Endothelial cell of umbilical vein (primary cell): ENCODE measurements at regions of chr11 and their contacts with region 1.

Region 1: DNA sequence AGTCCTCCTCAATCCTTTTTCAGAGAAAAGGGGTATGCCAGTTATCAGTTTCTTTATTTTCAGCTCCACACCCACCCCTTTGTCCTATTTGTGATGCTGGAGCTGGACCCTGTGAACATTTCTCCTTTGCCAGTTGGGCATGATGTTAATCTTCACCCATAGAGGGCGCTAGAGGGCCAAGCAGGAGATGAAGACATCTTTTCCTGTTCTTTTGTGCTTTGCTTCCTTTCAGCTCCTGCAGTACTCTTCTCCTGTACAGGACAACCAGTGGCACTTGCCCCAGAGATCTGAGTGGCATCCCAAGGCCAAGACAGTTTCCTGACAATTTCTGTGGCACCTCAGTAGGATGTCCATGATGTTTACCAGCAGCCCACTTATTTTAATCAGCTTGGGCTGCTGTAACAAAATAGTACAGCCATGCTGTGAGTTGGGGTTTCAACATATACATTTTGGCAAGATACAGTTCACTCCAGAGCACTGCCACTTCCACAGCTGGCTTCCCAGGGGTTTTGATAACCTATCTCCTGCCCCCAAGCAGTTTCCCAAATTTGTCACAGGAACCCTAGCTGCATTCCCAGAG is 4.6 kb downstream of the SAA2 start:
- DNase-seq: peak; percentile 65
- H3K4me3 ChIP-seq: no peak overlapping the region
- H3K27ac ChIP-seq: no peak overlapping the region
- H3K4me1 ChIP-seq: no peaks in the 10 kb centered on the region
- H3K27me3 ChIP-seq: peaks cover 10 to 13% of the 10 kb centered on the region in 2 experiments
- CTCF ChIP-seq: peak; percentile 69 to 84
- POLR2A ChIP-seq: no peak

Region 2: GRCh38 chr11:18229501-18229900 is 14.4 kb before region 1 on chr11:
- CTCF ChIA-PET with region 1: interaction called, 12 read pairs
- POLR2A ChIA-PET with region 1: no interaction called
- dilution Hi-C with region 1: no loop called
- intact Hi-C with region 1: no loop called
- DNase-seq: no peak
- H3K4me3 ChIP-seq: no peak overlapping the region
- H3K27ac ChIP-seq: no peak overlapping the region
- H3K4me1 ChIP-seq: no peaks in the 10 kb centered on the region
- H3K27me3 ChIP-seq: no peaks in the 10 kb centered on the region
- CTCF ChIP-seq: no peak
- POLR2A ChIP-seq: no peak

Region 3: DNA sequence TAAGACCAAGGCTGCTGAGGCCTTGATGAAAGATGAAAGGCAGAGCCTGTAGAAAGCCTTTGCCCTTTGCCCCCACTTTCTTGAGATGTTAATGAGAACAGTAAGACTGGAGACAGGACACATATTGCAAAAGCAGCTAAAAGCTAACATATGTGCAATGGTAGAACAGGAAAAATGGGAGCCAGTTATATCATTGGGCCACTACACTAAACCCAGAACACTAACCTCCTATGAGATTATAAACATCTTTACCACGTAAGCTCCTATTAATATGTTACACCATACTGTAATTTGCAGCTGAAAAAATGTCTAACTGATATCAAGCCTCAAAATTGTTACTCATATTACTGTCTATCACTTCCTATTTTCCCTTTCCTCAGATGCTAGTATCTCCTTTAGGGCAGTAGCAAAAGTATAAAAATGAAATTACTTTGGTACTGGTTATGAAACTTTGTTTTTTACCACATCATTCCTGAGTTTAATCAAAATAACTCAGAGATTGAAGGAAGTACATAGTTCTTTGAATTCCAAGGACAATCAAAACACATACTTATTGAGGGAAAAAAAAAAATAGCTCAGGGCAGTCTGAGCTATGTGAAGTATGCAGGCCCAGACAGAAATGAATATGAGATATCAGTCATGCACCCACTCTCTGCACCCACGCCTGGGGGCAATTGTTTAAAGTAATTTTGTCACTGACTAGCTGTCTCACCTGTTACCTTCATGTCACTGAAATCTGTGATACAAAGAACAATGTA is 69.0 kb after region 1 on chr11:
- CTCF ChIA-PET with region 1: interaction called, 10 read pairs
- POLR2A ChIA-PET with region 1: no interaction called
- dilution Hi-C with region 1: no loop called
- intact Hi-C with region 1: no loop called
- DNase-seq: peak; percentile 22
- H3K4me3 ChIP-seq: no peak overlapping the region
- H3K27ac ChIP-seq: no peak overlapping the region
- H3K4me1 ChIP-seq: no peaks in the 10 kb centered on the region
- H3K27me3 ChIP-seq: no peaks in the 10 kb centered on the region
- CTCF ChIP-seq: no peak
- POLR2A ChIP-seq: no peak

Region 4: DNA sequence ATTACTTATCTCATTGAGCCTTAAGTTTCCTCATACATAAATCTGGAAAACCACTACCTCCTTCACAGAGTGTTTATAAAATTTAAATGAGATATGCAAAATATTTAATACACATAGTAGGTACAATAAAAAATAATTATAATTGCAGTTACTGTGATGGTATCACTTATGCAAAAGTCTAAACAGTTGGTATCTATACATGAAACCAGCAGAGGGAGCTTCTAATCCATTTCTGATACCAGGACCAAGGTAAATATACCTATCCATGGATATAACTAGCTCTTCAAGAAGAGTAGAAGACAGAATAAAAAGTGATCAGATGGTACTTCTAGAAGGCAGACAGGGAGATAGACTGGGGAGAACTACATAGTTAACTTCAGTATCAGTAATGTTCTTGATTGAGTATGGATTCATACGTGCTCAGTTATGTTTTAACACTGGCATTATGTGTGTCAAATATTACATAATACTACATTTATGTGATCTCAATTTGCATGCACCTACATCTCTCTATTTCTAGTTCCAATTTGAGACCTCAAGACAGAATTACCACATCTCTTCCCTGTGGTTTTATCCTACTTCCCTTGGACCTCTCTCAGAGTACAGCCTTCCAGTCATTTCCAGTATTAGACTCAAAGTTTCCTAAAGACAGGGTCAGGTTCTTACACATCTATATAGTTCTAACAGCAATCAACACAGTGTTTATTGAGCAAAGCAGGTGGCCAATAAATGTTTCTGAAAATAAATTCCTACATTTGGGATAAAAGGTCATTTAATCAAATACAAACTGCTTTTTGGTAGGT is 296.5 kb after region 1 on chr11:
- CTCF ChIA-PET with region 1: interaction called, 13 read pairs
- POLR2A ChIA-PET with region 1: no interaction called
- dilution Hi-C with region 1: no loop called
- intact Hi-C with region 1: no loop called
- DNase-seq: peak; percentile 43
- H3K4me3 ChIP-seq: no peak overlapping the region
- H3K27ac ChIP-seq: no peak overlapping the region
- H3K4me1 ChIP-seq: no peaks in the 10 kb centered on the region
- H3K27me3 ChIP-seq: no peaks in the 10 kb centered on the region
- CTCF ChIP-seq: peak in 1 of 2 donors; percentile 26
- POLR2A ChIP-seq: no peak

Region 5: GRCh38 chr11:18731949-18732821 is 488.3 kb after region 1 on chr11:
- CTCF ChIA-PET with region 1: interaction called, 15 read pairs
- POLR2A ChIA-PET with region 1: no interaction called
- dilution Hi-C with region 1: no loop called
- intact Hi-C with region 1: loop called (anchors 1 kb)
- DNase-seq: peak; percentile 60
- H3K4me3 ChIP-seq: no peak overlapping the region
- H3K27ac ChIP-seq: no peak overlapping the region
- H3K4me1 ChIP-seq: no peaks in the 10 kb centered on the region
- H3K27me3 ChIP-seq: peaks cover 0 to 3% of the 10 kb centered on the region in 2 experiments
- CTCF ChIP-seq: peak; percentile 92 to 93
- POLR2A ChIP-seq: no peak

Region 6: DNA sequence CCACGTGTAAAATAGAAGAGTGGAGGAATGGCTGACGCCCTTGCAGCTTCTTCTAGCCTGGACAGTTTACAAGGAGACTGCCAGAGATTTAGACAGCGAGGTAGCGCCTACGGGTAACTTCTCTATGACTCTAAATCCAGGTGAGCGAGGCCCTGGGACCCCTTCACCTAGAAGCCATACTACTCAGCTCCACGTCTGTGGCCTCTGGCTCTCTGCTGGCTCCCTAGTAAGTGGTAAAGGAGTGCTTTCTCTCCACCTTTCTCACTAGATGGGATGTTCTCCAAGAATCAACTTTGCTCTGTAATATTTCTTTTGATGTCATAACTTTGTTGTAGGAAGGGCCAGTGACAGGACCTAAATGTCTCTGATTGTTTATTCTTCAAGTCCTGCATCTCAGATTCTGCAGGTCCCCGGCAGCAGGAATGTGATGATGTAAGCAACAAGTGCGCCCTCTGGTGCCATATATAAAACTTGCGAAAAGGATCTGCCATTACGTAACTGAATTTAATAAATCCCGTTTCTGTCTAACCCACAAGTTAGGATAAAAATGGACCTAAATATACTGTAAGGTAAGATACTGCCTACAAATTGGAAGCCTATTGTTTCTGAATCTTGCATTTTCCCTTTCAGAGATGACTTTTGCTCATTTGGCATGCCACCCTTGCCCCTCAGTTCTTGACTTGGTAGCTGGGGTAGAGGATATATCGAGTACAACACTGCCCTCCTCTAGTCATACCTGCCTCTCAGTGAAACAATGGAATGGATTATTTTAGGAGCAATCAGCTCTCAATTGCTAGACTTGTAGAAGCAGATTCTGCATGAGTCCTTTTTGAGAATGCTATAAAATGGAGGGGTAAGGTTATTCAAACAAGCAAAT is 558.7 kb after region 1 on chr11:
- CTCF ChIA-PET with region 1: interaction called, 14 read pairs
- POLR2A ChIA-PET with region 1: no interaction called
- dilution Hi-C with region 1: no loop called
- intact Hi-C with region 1: loop called (anchors 2 kb)
- DNase-seq: peak; percentile 69
- H3K4me3 ChIP-seq: no peak overlapping the region
- H3K27ac ChIP-seq: no peak overlapping the region
- H3K4me1 ChIP-seq: peaks cover 3% of the 10 kb centered on the region
- H3K27me3 ChIP-seq: peaks cover 8 to 13% of the 10 kb centered on the region in 2 experiments
- CTCF ChIP-seq: peak; percentile 53 to 57
- POLR2A ChIP-seq: no peak